Activated CD4-positive, alpha-beta T cell treated with anti-CD3 and anti-CD28 coated beads for 36 hours (primary cell): ENCODE measurements at regions of chr3 and their contacts with region 1.

Region 1: GRCh38 chr3:127697551-127698240 is 24.9 kb downstream of the ABTB1 start:
- DNase-seq: peak; percentile 75
- ATAC-seq: peak; percentile 92
- H3K4me3 Mint-ChIP-seq: no peak overlapping the region
- H3K27ac Mint-ChIP-seq: no peak overlapping the region
- H3K4me1 Mint-ChIP-seq: peaks cover 3% of the 10 kb centered on the region
- H3K27me3 Mint-ChIP-seq: no peaks in the 10 kb centered on the region

Region 2: GRCh38 chr3:127574880-127575878 is 122.5 kb before region 1 on chr3:
- CTCF ChIA-PET with region 1: interaction called, 6 read pairs
- POLR2A ChIA-PET with region 1: no interaction called
- intact Hi-C with region 1: loop called in 1 of 2 experiments (anchors 1 kb)
- DNase-seq: peak; percentile 90
- ATAC-seq: peak; percentile 97
- H3K4me3 Mint-ChIP-seq: no peak overlapping the region
- H3K27ac Mint-ChIP-seq: peak overlapping the region; percentile 34
- H3K4me1 Mint-ChIP-seq: peaks cover 8% of the 10 kb centered on the region
- H3K27me3 Mint-ChIP-seq: no peaks in the 10 kb centered on the region

Region 3: GRCh38 chr3:127652231-127652995 is 45.3 kb before region 1 on chr3:
- CTCF ChIA-PET with region 1: interaction called, 6 read pairs
- POLR2A ChIA-PET with region 1: no interaction called
- intact Hi-C with region 1: loop called in 1 of 2 experiments (anchors 1 kb)
- DNase-seq: peak; percentile 57
- ATAC-seq: peak; percentile 74
- H3K4me3 Mint-ChIP-seq: no peak overlapping the region
- H3K27ac Mint-ChIP-seq: no peak overlapping the region
- H3K4me1 Mint-ChIP-seq: no peaks in the 10 kb centered on the region
- H3K27me3 Mint-ChIP-seq: peaks cover 2% of the 10 kb centered on the region

Region 4: GRCh38 chr3:127831723-127832172 is 134.1 kb after region 1 on chr3:
- CTCF ChIA-PET with region 1: interaction called, 4 read pairs
- POLR2A ChIA-PET with region 1: no interaction called
- intact Hi-C with region 1: loop called in 1 of 2 experiments (anchors 5 kb)
- DNase-seq: peak; percentile 62
- ATAC-seq: no peak
- H3K4me3 Mint-ChIP-seq: no peak overlapping the region
- H3K27ac Mint-ChIP-seq: no peak overlapping the region
- H3K4me1 Mint-ChIP-seq: no peaks in the 10 kb centered on the region
- H3K27me3 Mint-ChIP-seq: peaks cover 6% of the 10 kb centered on the region

Region 5: DNA sequence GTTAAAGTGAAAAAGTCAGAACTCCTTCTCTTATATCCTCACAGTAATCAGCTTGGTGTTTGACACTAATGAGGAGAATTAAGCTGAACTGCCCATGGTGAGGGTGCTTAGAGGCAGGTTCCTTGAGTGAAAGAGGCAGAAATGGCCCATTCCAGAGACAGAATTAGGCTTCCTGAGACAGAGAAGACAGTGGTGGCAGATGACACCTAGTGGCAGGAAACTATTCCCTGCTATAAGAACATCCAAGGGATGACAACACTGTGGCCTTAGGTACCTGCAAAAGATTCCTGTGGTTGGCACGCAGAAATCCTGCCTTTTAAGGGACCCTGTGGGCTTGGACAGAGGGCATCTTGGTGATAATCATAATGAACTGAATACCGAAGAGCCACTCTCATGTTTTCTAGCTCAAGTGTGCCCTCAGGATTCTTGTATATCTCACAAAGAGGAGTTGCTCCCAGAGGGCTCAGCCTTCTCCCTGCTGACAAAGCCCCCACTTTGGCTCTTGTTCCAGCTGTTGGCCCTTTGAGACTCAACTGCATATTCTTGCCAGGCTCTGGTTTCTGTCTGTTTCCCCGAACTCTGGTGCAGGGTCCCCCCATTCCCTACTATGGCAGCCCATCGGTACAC is 273.4 kb after region 1 on chr3:
- CTCF ChIA-PET with region 1: no interaction called
- POLR2A ChIA-PET with region 1: no interaction called
- intact Hi-C with region 1: loop called in 1 of 2 experiments (anchors 5 kb)
- DNase-seq: peak; percentile 28
- ATAC-seq: peak; percentile 53
- H3K4me3 Mint-ChIP-seq: no peak overlapping the region
- H3K27ac Mint-ChIP-seq: no peak overlapping the region
- H3K4me1 Mint-ChIP-seq: no peaks in the 10 kb centered on the region
- H3K27me3 Mint-ChIP-seq: peaks cover 14% of the 10 kb centered on the region